CD4-positive, alpha-beta memory T cell (primary cell): ENCODE measurements at regions of chr12 and their contacts with region 1.

Region 1: GRCh38 chr12:96489103-96490056 is at the start of gene CFAP54:
- DNase-seq: peak; percentile 94 to 96 (median 95)
- H3K4me3 ChIP-seq: peak within 1 kb of the TSS; percentile 64 to 84
- H3K4me3 Mint-ChIP-seq: peak within 1 kb of the TSS; percentile 84 to 93 (median 92)
- H3K27ac ChIP-seq: peak within 1 kb of the TSS; percentile 62
- H3K27ac Mint-ChIP-seq: peak within 1 kb of the TSS; percentile 86 to 98 (median 97)
- H3K4me1 ChIP-seq: peaks cover 22% of the 10 kb centered on the region
- H3K4me1 Mint-ChIP-seq: peaks cover 19 to 31% (median 23%) of the 10 kb centered on the region in 4 donors
- H3K27me3 ChIP-seq: no peaks in the 10 kb centered on the region
- H3K27me3 Mint-ChIP-seq: no peaks in the 10 kb centered on the region
- total RNA-seq, gene CFAP54: 0.73 to 1.1 TPM

Region 2: DNA sequence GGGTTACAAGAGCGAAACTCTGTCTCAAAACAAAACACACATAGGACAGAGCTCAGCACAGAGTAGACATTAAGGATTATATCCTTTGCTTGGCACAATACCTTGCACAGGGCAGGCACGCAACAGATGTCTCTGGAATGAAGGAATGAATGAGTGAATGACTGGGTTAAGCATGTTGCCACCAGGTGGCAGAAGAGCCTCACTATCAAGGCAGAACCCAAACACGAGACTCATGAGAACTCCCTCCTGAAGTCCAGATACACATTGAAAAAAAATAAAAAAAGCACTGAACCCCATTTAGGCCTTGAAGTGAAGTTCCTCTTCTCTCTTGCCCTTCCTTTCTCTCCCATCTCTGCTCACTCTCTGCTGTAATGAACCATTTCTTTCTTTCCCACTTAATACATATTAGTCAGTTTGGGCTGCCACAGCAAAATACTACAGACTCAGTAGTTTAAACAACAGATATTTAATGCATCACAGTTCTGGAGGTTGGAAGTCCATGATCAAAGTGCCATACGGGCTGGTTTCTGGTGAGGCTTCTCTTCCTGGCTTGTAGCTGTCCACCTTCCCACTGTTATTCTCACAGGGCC is 427.4 kb before region 1 on chr12:
- CTCF ChIA-PET with region 1: interaction called, 11 read pairs
- POLR2A ChIA-PET with region 1: no interaction called
- intact Hi-C with region 1: no loop called
- DNase-seq: peak; percentile 75 to 80 (median 78)
- H3K4me3 ChIP-seq: no peak overlapping the region
- H3K4me3 Mint-ChIP-seq: peak overlapping the region in 1 of 8 donors; percentile 9
- H3K27ac ChIP-seq: no peak overlapping the region
- H3K27ac Mint-ChIP-seq: peak overlapping the region in 5 of 7 donors; percentile 1 to 73 (median 36)
- H3K4me1 ChIP-seq: peaks cover 26% of the 10 kb centered on the region
- H3K4me1 Mint-ChIP-seq: peaks cover 19 to 36% (median 27%) of the 10 kb centered on the region in 4 donors
- H3K27me3 ChIP-seq: no peaks in the 10 kb centered on the region
- H3K27me3 Mint-ChIP-seq: no peaks in the 10 kb centered on the region

Region 3: GRCh38 chr12:96194971-96195844 is 294.2 kb before region 1 on chr12:
- CTCF ChIA-PET with region 1: no interaction called
- POLR2A ChIA-PET with region 1: interaction called, 3 read pairs
- intact Hi-C with region 1: loop called (anchors 5 kb)
- DNase-seq: peak; percentile 72 to 94 (median 76)
- H3K4me3 ChIP-seq: peak overlapping the region; percentile 85 to 90
- H3K4me3 Mint-ChIP-seq: peak overlapping the region; percentile 93 to 100 (median 98)
- H3K27ac ChIP-seq: peak overlapping the region; percentile 95
- H3K27ac Mint-ChIP-seq: peak overlapping the region; percentile 96 to 100 (median 97)
- H3K4me1 ChIP-seq: peaks cover 52% of the 10 kb centered on the region
- H3K4me1 Mint-ChIP-seq: peaks cover 34 to 62% (median 42%) of the 10 kb centered on the region in 4 donors
- H3K27me3 ChIP-seq: no peaks in the 10 kb centered on the region
- H3K27me3 Mint-ChIP-seq: no peaks in the 10 kb centered on the region

Region 4: DNA sequence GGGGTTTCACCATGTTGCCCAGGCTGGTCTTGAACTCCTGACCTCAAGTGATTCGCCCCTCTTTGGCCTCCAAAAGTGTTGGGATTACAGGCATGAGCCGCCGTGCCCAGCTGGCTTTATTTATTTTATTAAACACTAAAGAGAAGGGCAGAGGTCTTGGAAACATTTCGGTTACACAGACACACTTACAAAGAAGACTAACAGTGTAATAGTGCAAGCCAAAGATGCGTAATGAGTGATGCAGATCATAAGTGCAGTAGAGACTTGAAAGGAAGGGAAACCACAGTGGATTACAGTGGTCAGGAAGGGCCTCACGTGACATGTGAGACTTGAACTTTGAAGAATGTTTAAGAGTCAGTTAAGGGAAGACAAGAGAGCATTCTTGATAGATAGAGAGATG is 55.3 kb before region 1 on chr12:
- CTCF ChIA-PET with region 1: interaction called, 5 read pairs
- POLR2A ChIA-PET with region 1: no interaction called
- intact Hi-C with region 1: loop called (anchors 5 kb)
- DNase-seq: peak; percentile 87 to 92 (median 89)
- H3K4me3 ChIP-seq: no peak overlapping the region
- H3K4me3 Mint-ChIP-seq: peak overlapping the region; percentile 4 to 74 (median 56)
- H3K27ac ChIP-seq: peak overlapping the region; percentile 56
- H3K27ac Mint-ChIP-seq: peak overlapping the region; percentile 52 to 97 (median 88)
- H3K4me1 ChIP-seq: peaks cover 19% of the 10 kb centered on the region
- H3K4me1 Mint-ChIP-seq: peaks cover 11 to 32% (median 23%) of the 10 kb centered on the region in 4 donors
- H3K27me3 ChIP-seq: no peaks in the 10 kb centered on the region
- H3K27me3 Mint-ChIP-seq: no peaks in the 10 kb centered on the region

Region 5: GRCh38 chr12:96445691-96446583 is 43.4 kb before region 1 on chr12:
- CTCF ChIA-PET with region 1: interaction called, 17 read pairs
- POLR2A ChIA-PET with region 1: interaction called, 7 read pairs
- intact Hi-C with region 1: loop called (anchors 1 kb)
- DNase-seq: peak; percentile 82 to 91 (median 86)
- H3K4me3 ChIP-seq: no peak overlapping the region
- H3K4me3 Mint-ChIP-seq: peak overlapping the region in 7 of 8 donors; percentile 31 to 72 (median 67)
- H3K27ac ChIP-seq: peak overlapping the region; percentile 92
- H3K27ac Mint-ChIP-seq: peak overlapping the region; percentile 93 to 99 (median 98)
- H3K4me1 ChIP-seq: peaks cover 36% of the 10 kb centered on the region
- H3K4me1 Mint-ChIP-seq: peaks cover 27 to 52% (median 36%) of the 10 kb centered on the region in 4 donors
- H3K27me3 ChIP-seq: no peaks in the 10 kb centered on the region
- H3K27me3 Mint-ChIP-seq: no peaks in the 10 kb centered on the region

Region 6: DNA sequence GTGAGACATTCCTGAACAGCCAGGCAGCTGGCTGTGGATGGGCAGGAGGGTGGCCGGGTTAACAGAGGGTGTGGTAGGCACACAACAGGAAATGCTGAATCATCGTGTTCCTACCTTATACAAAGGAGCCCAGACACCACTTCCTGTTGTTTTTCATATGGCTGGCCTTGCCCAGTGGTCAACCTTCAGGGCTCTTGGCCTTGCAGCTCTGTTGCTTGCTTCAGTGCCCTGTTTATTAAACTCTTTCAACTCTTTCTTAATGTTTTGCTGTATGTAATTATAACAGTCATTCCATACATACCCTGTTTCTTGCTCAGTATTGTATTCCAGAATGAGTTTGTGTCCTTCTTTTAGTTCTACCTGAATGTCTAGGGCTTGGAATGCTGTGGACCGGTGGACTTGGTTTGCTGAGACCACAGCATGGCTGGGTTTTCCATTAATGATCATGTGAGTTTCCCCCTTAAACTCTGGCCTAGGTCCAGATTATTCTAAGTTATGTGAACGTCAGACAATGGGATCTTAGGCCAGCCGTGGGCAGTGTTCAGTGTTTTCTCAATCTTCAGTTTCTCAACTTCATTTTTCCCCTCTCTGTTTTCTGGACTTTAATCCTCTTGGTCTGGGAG is 11.9 kb after region 1 on chr12:
- CTCF ChIA-PET with region 1: interaction called, 54 read pairs
- POLR2A ChIA-PET with region 1: interaction called, 38 read pairs
- intact Hi-C with region 1: loop called (anchors 1 kb)
- DNase-seq: peak in 4 of 5 donors; percentile 29 to 65 (median 37)
- H3K4me3 ChIP-seq: peak overlapping the region in 1 of 2 donors; percentile 17
- H3K4me3 Mint-ChIP-seq: peak overlapping the region in 7 of 8 donors; percentile 35 to 74 (median 53)
- H3K27ac ChIP-seq: peak overlapping the region; percentile 18
- H3K27ac Mint-ChIP-seq: peak overlapping the region; percentile 79 to 98 (median 89)
- H3K4me1 ChIP-seq: peaks cover 46% of the 10 kb centered on the region
- H3K4me1 Mint-ChIP-seq: peaks cover 44 to 63% (median 54%) of the 10 kb centered on the region in 4 donors
- H3K27me3 ChIP-seq: no peaks in the 10 kb centered on the region
- H3K27me3 Mint-ChIP-seq: no peaks in the 10 kb centered on the region

Region 7: GRCh38 chr12:96506776-96507175 is 17.4 kb after region 1 on chr12:
- CTCF ChIA-PET with region 1: interaction called, 54 read pairs
- POLR2A ChIA-PET with region 1: interaction called, 38 read pairs
- intact Hi-C with region 1: loop called (anchors 1 kb)
- DNase-seq: no peak
- H3K4me3 ChIP-seq: no peak overlapping the region
- H3K4me3 Mint-ChIP-seq: no peak overlapping the region
- H3K27ac ChIP-seq: no peak overlapping the region
- H3K27ac Mint-ChIP-seq: no peak overlapping the region
- H3K4me1 ChIP-seq: peaks cover 18% of the 10 kb centered on the region
- H3K4me1 Mint-ChIP-seq: peaks cover 17 to 22% (median 19%) of the 10 kb centered on the region in 4 donors
- H3K27me3 ChIP-seq: no peaks in the 10 kb centered on the region
- H3K27me3 Mint-ChIP-seq: no peaks in the 10 kb centered on the region